Activated CD4-positive, alpha-beta T cell treated with anti-CD3 and anti-CD28 coated beads, Interleukin-2, amount 10 ng/mL, durations not matched to agents 24 days and 14 days (primary cell): ENCODE measurements at regions of chr10 and their contacts with region 1.

Region 1: DNA sequence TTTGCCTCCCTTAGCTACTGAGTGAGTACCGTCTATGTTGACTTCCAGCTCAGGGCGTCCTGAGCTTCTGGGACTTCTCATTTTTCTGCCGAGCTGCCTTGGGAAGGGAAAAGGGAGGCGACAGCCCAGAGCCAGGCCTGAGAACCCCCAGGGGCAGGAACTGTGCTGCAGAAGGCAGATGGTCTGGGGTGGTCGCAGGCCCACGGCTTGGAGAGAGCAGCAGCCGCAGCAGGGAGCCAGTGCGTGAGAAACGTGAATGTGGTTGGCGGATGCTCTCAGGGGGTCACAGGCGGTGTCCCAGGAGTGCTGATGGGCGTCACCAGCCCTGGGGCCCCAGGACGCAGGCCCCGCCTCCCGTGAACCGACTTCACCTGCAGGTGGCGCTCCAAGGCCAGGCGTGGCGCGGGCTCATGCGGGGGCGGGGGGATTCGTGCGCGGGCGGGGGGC is 9.2 kb upstream of the PWWP2B start:
- DNase-seq: peak; percentile 95
- H3K4me3 Mint-ChIP-seq: peak overlapping the region; percentile 55
- H3K27ac Mint-ChIP-seq: peak overlapping the region; percentile 93
- H3K4me1 Mint-ChIP-seq: peaks cover 5% of the 10 kb centered on the region
- H3K27me3 Mint-ChIP-seq: peaks cover 3% of the 10 kb centered on the region

Region 2: DNA sequence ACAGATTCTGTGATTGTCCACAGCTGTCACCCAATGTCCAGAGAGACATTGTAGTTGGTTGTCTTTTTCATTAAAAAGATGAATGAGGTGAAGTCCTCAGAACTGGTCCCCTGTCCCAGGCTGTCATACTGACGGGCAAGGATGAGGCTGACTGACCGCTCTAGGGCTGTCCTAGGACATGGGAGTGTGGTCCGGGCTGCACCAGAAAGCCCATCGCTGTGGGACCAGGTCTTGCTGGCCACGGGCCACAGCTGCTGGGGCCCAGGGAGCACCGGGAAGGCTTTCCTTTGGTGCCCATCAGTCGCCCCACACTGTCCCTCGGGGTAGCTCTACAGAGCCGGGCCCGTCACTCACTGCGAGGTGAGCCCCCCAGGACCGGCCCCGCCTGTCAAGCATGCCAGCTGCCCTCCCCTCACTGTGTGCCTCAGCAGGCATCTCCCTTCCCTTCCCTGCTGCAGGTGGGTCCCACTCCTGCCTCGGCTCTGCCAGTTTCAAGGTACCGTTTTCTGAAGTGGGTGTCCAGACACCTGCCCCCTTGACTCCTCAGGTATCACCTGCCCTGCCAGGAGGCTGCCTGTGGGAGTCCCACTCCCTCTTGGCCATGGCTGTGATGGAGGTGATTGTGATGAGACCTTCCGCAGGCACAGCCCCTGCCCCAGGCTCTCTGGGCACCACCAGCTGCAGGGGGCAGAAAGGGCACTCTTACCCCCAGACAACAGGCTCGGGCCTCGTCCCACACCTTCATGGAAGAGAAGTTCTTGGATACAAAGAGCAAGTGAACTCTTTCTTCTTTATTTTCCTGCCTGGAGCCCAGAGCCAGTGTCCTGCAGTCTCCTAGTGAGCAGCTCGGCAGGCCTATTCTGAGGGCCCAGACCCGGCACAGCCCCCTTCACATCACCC is 34.1 kb before region 1 on chr10:
- intact Hi-C with region 1: no loop called
- DNase-seq: no peak
- H3K4me3 Mint-ChIP-seq: no peak overlapping the region
- H3K27ac Mint-ChIP-seq: no peak overlapping the region
- H3K4me1 Mint-ChIP-seq: peaks cover 2% of the 10 kb centered on the region
- H3K27me3 Mint-ChIP-seq: no peaks in the 10 kb centered on the region

Region 3: DNA sequence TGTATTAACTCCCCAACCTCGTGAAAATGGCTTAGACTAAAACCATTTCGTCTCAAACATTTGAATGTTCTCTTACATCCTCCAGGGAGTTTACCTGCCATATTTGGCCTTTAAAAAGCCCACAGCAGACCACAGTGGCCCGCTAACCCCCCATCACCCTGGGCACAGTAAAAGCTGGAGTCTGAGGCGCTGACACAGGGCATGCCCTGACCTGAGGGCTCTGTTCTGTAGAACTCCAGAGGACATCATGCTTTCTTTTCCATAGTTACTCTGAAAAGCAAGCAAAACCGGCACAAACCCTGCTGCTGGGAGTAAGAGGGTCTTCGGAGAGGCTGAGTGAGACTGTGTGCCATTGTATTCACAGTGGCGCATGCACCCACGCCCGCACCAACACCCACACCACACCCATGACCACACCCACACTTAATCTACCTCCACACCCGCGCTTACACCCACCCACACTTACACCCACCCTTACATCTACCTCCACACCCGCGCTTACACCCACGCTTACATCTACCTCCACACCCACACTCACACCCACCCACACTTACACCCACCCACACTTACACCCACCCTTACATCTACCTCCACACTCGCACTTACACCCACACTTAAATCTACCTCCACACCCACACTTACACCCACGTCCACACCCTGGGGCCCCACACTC is 23.7 kb before region 1 on chr10:
- intact Hi-C with region 1: loop called (anchors 2 kb)
- DNase-seq: no peak
- H3K4me3 Mint-ChIP-seq: peak overlapping the region; percentile 59
- H3K27ac Mint-ChIP-seq: peak overlapping the region; percentile 77
- H3K4me1 Mint-ChIP-seq: peaks cover 8% of the 10 kb centered on the region
- H3K27me3 Mint-ChIP-seq: peaks cover 2% of the 10 kb centered on the region

Region 4: DNA sequence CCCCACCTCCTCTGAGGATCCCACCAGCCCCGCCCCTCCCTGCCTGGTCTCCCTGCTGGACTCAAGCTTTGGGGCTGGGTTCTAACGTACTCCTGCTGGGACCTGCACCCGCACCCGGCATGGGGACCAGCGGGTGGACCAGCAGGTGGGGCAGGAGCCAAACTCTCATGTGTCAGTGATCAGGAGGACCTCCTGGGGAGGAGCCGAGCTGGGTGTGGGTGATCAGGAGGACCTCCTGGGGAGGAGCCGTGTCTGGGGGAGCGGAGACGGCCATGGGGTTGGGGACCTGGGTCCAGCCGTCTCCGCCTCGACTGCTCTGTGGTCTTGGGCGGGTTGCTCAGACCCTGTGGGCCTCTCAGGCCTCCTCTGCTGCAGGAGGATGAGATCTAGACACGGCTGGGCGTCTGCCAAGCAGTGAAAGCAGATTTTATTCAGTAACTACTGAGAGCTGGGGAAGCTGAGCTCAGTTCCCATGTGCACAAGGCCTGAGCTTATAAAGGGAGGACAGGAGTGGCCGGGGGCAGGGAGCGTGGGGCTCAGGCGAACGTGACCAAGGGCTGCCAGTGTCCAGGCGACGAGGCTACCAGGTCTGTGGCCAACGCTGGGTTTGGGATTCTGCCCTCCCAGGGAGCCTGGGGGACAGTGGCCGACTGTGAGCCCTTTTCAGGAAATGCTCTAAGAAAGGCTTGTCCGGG is 808.6 kb after region 1 on chr10:
- intact Hi-C with region 1: no loop called
- DNase-seq: no peak
- H3K4me3 Mint-ChIP-seq: no peak overlapping the region
- H3K27ac Mint-ChIP-seq: no peak overlapping the region
- H3K4me1 Mint-ChIP-seq: no peaks in the 10 kb centered on the region
- H3K27me3 Mint-ChIP-seq: peaks cover 11% of the 10 kb centered on the region